CD8-positive, alpha-beta T cell (primary cell): ENCODE measurements at regions of chr3 and their contacts with region 1.

Region 1: DNA sequence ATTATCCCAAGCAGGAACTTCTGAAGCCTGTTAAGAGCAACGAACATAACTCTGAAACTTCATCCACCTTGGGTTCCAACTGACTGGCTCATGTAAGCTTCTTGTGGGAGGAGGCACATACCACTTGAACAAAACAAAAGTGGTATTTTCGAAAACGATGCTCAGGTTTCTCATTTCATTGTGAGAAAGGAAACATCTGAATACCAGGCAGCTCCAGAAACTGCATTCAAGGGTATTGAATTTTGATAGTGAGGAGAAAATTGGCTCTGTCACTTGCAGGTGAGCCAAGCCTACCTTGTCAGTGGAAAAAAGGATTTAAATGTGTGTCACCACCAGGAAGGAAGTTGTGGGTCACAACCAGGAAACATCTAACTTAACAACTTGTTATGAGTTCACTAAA is 218.1 kb upstream of the SATB1 start:
- DNase-seq: peak in 2 of 9 experiments; percentile 5 to 20
- ATAC-seq: no peak
- H3K4me3 ChIP-seq: no peak overlapping the region
- H3K4me3 Mint-ChIP-seq: no peak overlapping the region
- H3K27ac ChIP-seq: no peak overlapping the region
- H3K27ac Mint-ChIP-seq: no peak overlapping the region
- H3K4me1 ChIP-seq: peaks cover 22% of the 10 kb centered on the region
- H3K4me1 Mint-ChIP-seq: peaks cover 33% of the 10 kb centered on the region
- H3K27me3 ChIP-seq: no peaks in the 10 kb centered on the region
- H3K27me3 Mint-ChIP-seq: no peaks in the 10 kb centered on the region
- CTCF ChIP-seq: no peak

Region 2: GRCh38 chr3:18657858-18658820 is 14.9 kb after region 1 on chr3:
- CTCF ChIA-PET with region 1: interaction called, 4 read pairs
- POLR2A ChIA-PET with region 1: no interaction called
- intact Hi-C with region 1: loop called in 1 of 2 experiments (anchors 2 kb)
- DNase-seq: peak in 4 of 9 experiments; percentile 1 to 31 (median 13)
- ATAC-seq: peak; percentile 42
- H3K4me3 ChIP-seq: no peak overlapping the region
- H3K4me3 Mint-ChIP-seq: no peak overlapping the region
- H3K27ac ChIP-seq: no peak overlapping the region
- H3K27ac Mint-ChIP-seq: no peak overlapping the region
- H3K4me1 ChIP-seq: peaks cover 25% of the 10 kb centered on the region
- H3K4me1 Mint-ChIP-seq: peaks cover 34% of the 10 kb centered on the region
- H3K27me3 ChIP-seq: no peaks in the 10 kb centered on the region
- H3K27me3 Mint-ChIP-seq: no peaks in the 10 kb centered on the region
- CTCF ChIP-seq: no peak